ENCODE measurements at regions of chr15 and their contacts with region 1.

Region 1: DNA sequence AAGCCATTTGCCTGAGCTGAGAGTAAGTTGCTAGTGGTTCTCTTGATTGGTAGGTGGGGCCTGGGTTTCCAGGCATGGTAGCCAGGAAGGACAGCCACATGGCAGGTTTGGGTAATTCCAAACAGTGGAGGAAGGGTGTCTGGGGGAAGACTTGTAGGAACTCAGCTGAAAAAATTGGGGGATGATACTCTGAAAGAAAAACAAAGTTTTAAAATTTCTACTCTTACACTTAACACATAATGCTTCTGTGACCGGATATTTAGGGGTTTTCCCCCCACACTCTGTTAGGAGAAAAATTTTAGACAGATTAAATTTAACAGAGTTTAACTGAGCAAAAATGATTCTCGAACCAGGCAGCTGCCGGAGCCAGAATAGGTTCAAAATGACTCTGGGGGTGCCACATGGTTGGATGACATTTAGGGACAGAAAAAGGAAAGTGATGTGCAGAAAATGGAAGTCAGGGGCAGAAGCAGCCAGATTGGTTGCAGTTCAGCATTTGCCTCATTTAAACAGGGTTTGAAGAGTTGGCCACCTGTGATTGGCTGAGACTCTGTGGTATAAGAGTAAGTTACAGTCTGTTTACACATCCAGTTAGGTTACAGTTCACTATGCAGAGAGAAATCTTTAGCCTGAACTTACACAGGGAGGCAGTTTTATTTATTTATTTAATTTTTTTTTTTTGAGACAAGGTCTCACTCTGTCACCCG is 8.1 kb downstream of the B2M start:
- DNase-seq: peak; percentile 34 to 75 (median 72)
- H3K4me3 ChIP-seq: no peak overlapping the region
- H3K4me3 Mint-ChIP-seq: peak overlapping the region; percentile 51 to 85 (median 73)
- H3K27ac ChIP-seq: peak overlapping the region; percentile 19
- H3K27ac Mint-ChIP-seq: peak overlapping the region; percentile 79 to 100 (median 94)
- H3K4me1 ChIP-seq: peaks cover 93% of the 10 kb centered on the region
- H3K4me1 Mint-ChIP-seq: peaks cover 84 to 95% (median 90%) of the 10 kb centered on the region in 3 donors
- H3K27me3 ChIP-seq: no peaks in the 10 kb centered on the region
- H3K27me3 Mint-ChIP-seq: no peaks in the 10 kb centered on the region

Region 2: DNA sequence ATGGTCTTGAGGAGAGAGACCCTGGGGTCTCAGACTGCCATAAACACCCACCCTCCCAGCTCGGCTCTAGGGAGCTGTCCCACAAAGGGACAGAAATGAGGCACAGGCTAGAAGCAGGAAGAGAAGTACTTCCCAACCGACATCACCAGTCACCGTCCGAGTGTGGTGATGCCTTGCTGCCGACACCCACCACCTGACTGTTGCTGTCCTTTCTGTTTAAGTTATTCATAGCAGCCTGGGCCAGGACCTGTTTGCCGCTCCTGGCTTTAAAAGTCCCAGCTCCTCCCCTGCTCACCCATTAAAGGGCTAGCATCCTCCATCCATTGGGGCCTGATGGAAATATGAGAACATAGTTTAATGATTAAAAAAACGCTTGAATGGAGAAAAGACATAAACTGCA is 42.8 kb before region 1 on chr15:
- CTCF ChIA-PET with region 1: interaction called, 478 read pairs
- POLR2A ChIA-PET with region 1: interaction called, 604 read pairs
- DNase-seq: no peak
- H3K4me3 ChIP-seq: peak overlapping the region; percentile 48
- H3K4me3 Mint-ChIP-seq: peak overlapping the region; percentile 65 to 97 (median 89)
- H3K27ac ChIP-seq: peak overlapping the region; percentile 15
- H3K27ac Mint-ChIP-seq: peak overlapping the region; percentile 92 to 98 (median 96)
- H3K4me1 ChIP-seq: peaks cover 96% of the 10 kb centered on the region
- H3K4me1 Mint-ChIP-seq: peaks cover 82 to 95% (median 93%) of the 10 kb centered on the region in 3 donors
- H3K27me3 ChIP-seq: no peaks in the 10 kb centered on the region
- H3K27me3 Mint-ChIP-seq: no peaks in the 10 kb centered on the region